ENCODE measurements at regions of chr7 and their contacts with region 1.

Region 1: DNA sequence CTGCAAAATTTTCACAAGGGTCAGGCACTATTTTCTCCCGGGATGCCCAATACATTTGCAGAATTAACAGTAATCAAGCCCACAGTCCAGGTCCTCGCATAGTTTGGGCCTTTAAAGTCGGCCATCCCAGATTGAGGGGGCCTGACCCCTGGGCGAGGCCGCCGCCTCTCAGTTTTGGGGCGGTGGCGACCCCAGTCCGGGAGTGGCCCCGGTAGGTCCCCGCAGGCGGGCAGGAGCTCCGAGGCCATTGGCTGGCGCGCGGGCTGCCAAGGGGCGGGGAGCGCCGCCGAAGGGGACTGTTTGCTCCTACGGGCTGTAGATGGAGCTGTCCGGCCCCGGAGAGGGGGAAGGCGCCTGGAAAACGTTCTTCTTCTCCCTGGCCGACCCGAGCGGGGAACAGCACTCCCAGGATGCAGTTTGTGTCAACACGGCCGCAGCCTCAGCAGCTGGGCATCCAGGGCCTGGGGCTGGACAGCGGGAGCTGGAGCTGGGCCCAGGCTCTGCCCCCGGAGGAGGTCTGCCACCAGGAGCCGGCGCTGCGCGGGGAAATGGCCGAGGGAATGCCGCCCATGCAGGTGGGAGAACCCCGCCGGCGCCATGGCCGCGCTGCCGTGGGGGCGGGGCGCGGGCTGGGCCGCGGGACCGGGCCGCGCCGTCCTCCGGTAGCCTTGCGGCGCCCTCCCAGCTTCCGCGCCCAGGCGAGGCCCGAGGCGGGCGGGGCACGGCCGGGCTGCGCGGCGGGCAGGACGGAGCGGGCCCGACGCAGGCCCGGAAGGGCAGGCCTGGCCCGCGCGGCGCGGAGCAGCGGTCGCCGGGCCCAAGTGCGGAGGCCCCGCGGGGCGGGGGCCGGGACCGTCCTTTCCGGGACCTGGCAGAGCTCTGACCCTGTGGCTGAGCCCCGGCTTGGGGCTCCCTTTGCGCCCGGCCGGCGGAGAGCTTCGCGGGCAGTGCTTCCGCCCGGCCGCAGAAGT is at the start of gene ZNF282:
- DNase-seq: peak; percentile 73
- H3K4me3 Mint-ChIP-seq: peak within 1 kb of the TSS; percentile 90
- H3K27ac Mint-ChIP-seq: peak within 1 kb of the TSS; percentile 90
- H3K4me1 Mint-ChIP-seq: peaks cover 55% of the 10 kb centered on the region
- H3K27me3 Mint-ChIP-seq: peaks cover 3% of the 10 kb centered on the region
- total RNA-seq, gene ZNF282: 49.4 and 55.8 TPM in 2 replicates

Region 2: GRCh38 chr7:149028346-149029109 is 166.9 kb before region 1 on chr7 and contains the start of gene PDIA4:
- intact Hi-C with region 1: loop called (anchors 2 kb)
- DNase-seq: peak; percentile 100
- H3K4me3 Mint-ChIP-seq: peak within 1 kb of the TSS; percentile 98
- H3K27ac Mint-ChIP-seq: peak within 1 kb of the TSS; percentile 93
- H3K4me1 Mint-ChIP-seq: peaks cover 34% of the 10 kb centered on the region
- H3K27me3 Mint-ChIP-seq: peaks cover 2% of the 10 kb centered on the region
- total RNA-seq, gene PDIA4: 132 and 142 TPM in 2 replicates

Region 3: GRCh38 chr7:149125863-149126661 is 69.4 kb before region 1 on chr7 and contains the start of gene ZNF425:
- intact Hi-C with region 1: loop called (anchors 1 kb)
- DNase-seq: peak; percentile 93
- H3K4me3 Mint-ChIP-seq: peak within 1 kb of the TSS; percentile 100
- H3K27ac Mint-ChIP-seq: peak within 1 kb of the TSS; percentile 100
- H3K4me1 Mint-ChIP-seq: peaks cover 28% of the 10 kb centered on the region
- H3K27me3 Mint-ChIP-seq: no peaks in the 10 kb centered on the region
- total RNA-seq, gene ZNF425: 1.1 and 1.2 TPM in 2 replicates

Region 4: GRCh38 chr7:149239345-149240191 is 44.1 kb after region 1 on chr7 and contains the start of gene ZNF212:
- intact Hi-C with region 1: loop called (anchors 2 kb)
- DNase-seq: peak; percentile 84
- H3K4me3 Mint-ChIP-seq: peak within 1 kb of the TSS; percentile 92
- H3K27ac Mint-ChIP-seq: peak within 1 kb of the TSS; percentile 81
- H3K4me1 Mint-ChIP-seq: peaks cover 27% of the 10 kb centered on the region
- H3K27me3 Mint-ChIP-seq: no peaks in the 10 kb centered on the region
- total RNA-seq, gene ZNF212: 15.0 and 17.8 TPM in 2 replicates

Region 5: GRCh38 chr7:149422129-149422913 is 226.9 kb after region 1 on chr7:
- intact Hi-C with region 1: loop called (anchors 2 kb)
- DNase-seq: peak; percentile 73
- H3K4me3 Mint-ChIP-seq: peak overlapping the region; percentile 66
- H3K27ac Mint-ChIP-seq: peak overlapping the region; percentile 61
- H3K4me1 Mint-ChIP-seq: no peaks in the 10 kb centered on the region
- H3K27me3 Mint-ChIP-seq: peaks cover 4% of the 10 kb centered on the region

Region 6: DNA sequence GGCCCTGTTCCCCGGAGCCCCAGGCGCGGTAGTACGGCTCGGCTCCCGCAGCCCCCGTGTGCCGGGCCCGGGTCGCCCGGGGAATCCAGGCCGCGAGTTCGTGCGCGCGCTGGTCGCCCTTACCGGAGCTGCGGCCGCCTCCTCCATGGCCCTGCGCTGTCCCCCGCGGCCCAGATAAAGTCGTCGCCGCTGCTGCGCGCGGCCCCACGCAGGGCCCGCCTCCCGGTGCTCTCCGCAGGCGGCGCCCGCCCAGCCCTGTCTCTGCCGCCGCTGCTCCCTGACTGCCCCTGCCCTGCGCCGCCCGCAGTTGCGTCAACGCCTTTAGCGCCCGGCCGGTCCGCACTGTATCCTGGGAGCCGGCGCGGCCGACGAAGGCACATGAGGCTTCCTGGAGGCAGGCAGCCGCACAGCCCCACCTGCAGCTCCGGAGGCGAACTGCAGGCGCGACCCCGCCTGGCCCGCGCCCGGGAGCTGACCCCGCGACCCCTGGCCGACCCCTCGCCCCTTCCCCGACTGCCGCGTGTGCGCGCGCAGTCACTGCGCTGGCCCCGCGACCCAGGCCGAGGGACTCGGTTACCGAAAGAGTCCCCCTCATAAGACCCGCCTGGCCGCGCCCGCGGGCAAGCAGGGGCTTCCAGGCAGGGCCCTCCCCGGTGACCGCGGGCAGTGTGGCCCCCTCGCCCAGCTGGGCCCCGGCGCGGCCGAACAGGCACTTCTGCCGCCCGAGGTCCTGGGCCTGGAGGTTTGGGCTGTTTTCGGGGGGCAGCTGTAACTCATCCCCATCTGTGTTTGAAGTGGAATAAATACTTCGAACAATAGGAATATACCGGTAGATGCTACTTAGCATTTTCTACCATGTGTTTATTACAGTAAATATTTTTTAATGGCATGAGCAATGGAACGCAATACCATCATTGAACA is 429.2 kb after region 1 on chr7:
- intact Hi-C with region 1: loop called (anchors 10 kb)
- DNase-seq: peak; percentile 91
- H3K4me3 Mint-ChIP-seq: peak overlapping the region; percentile 89
- H3K27ac Mint-ChIP-seq: peak overlapping the region; percentile 83
- H3K4me1 Mint-ChIP-seq: peaks cover 32% of the 10 kb centered on the region
- H3K27me3 Mint-ChIP-seq: peaks cover 6% of the 10 kb centered on the region

Measured in activated T-helper 1 cell treated with anti-CD3 and anti-CD28 coated beads, Interleukin-12 subunit alpha, Interleukin-12 subunit beta, Interleukin-2, Interleukin-4 antibody, amounts not matched to agents 30 ng/mL and 10 ng/mL and 1 ng/mL, durations not matched to agents 14 hours and 24 hours and 36 hours (primary cell).